ENCODE measurements at regions of chr17 and their contacts with region 1.

Region 1: GRCh38 chr17:79915850-79916430 is 76.7 kb upstream of the CBX4 start:
- DNase-seq: no peak
- H3K4me3 ChIP-seq: no peak overlapping the region
- H3K27ac ChIP-seq: no peak overlapping the region
- H3K4me1 ChIP-seq: peaks cover 3 to 8% of the 10 kb centered on the region in 2 donors
- H3K27me3 ChIP-seq: peaks cover 5% of the 10 kb centered on the region
- CTCF ChIP-seq: peak in 5 of 6 experiments; percentile 24 to 44 (median 39)
- POLR2A ChIP-seq: no peak

Region 2: GRCh38 chr17:79779657-79780365 is 136.1 kb before region 1 on chr17:
- intact Hi-C with region 1: loop called in 1 of 2 experiments (anchors 5 kb)
- DNase-seq: no peak
- H3K4me3 ChIP-seq: no peak overlapping the region
- H3K27ac ChIP-seq: no peak overlapping the region
- H3K4me1 ChIP-seq: peaks cover 7 to 8% of the 10 kb centered on the region in 2 donors
- H3K27me3 ChIP-seq: peaks cover 36% of the 10 kb centered on the region
- CTCF ChIP-seq: no peak
- POLR2A ChIP-seq: no peak

Region 3: DNA sequence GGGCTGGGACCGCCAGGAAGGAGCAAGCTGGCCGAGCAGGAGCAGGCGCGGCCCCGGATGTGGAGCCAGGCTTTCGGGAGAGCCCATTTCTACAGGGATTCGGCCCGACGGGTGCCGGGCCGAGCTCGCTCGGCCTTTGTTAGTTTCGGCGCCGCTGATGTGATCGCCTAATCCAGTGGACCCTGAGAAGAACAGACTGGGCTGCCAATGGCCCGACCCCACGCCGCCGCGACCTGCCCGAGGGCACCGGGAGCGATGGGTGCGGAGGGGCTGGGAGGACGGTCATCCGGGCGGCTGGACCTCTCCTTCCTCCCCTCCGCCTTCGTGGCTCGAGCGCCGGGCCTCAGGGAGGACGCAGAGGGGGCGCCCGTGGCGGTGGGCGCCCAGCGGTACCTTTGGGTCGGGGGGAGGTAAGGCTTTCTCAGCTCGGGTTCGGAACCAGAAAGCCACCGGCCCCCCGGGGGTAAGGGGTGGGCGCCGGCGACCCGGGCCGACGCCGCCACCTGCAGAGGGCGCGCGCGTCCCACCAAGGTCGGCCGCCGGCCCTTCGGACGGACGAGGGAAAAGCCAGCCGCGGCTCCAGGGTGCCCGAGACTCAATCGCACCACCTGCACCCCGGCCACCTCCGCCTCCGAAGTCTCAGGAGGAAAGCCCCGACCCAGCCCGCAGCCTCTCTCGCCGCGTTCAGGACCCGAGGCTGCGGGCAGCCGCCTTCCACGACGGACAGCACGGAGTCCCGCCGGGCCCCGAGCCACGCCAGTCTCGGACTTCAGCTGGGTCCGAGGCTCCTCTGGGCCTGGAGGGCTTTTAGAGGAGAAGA is 126.2 kb before region 1 on chr17:
- intact Hi-C with region 1: loop called (anchors 5 kb)
- DNase-seq: peak in 2 of 7 donors; percentile 45 to 47
- H3K4me3 ChIP-seq: peak overlapping the region in 1 of 4 donors; percentile 35
- H3K27ac ChIP-seq: no peak overlapping the region
- H3K4me1 ChIP-seq: peaks cover 0 to 7% of the 10 kb centered on the region in 2 donors
- H3K27me3 ChIP-seq: peaks cover 76% of the 10 kb centered on the region
- CTCF ChIP-seq: peak; percentile 37 to 81 (median 62)
- POLR2A ChIP-seq: no peak

Region 4: DNA sequence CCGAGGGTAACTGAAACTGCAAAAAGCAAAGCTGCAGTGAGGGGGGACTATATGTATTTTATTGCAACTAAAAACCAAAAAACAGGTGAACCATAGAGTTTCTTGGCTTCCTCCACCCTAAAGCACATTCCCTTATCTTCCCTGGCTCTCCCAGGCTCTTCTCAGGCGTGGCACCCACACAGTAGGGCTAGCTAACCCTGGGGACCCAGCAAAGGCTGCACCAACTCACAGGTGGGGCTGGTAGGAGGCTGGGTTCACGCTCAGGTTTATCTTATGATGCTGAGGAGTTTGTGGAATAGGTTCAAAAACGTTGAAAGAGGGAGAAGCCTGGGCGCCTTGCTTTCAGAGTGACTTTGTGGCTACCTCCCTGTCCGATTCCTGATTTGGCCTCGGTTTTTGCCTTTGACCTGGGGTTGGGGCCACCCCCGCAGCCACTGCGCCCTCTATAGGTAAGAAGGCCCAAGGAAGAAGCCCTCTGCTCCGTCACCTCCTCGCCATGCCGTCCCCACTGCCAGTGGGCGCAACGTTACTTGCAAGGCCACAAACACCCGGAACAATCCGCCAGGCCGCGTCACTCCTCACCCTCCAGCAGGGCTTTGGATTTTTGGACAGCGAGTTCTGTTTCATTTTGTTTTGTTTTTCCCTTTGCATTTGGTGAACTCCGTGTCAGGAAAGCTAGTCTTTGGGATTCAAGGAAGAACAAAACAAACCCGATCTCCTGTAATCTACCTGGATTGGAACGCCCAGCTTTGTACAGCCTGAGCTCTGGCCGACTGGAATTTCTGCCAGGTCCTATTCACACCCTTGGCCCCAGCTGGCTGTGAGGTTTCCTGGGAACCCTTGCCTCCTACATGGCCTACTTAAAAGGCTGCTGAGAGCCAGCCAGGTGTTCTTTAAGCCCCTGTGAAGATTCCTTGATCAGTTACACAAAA is 58.9 kb after region 1 on chr17:
- intact Hi-C with region 1: no loop called
- DNase-seq: peak in 2 of 7 donors; percentile 13 to 47
- H3K4me3 ChIP-seq: no peak overlapping the region
- H3K27ac ChIP-seq: no peak overlapping the region
- H3K4me1 ChIP-seq: peaks cover 8 to 12% of the 10 kb centered on the region in 2 donors
- H3K27me3 ChIP-seq: no peaks in the 10 kb centered on the region
- CTCF ChIP-seq: no peak
- POLR2A ChIP-seq: no peak